ENCODE measurements at regions of chr19 and their contacts with region 1.

Region 1: DNA sequence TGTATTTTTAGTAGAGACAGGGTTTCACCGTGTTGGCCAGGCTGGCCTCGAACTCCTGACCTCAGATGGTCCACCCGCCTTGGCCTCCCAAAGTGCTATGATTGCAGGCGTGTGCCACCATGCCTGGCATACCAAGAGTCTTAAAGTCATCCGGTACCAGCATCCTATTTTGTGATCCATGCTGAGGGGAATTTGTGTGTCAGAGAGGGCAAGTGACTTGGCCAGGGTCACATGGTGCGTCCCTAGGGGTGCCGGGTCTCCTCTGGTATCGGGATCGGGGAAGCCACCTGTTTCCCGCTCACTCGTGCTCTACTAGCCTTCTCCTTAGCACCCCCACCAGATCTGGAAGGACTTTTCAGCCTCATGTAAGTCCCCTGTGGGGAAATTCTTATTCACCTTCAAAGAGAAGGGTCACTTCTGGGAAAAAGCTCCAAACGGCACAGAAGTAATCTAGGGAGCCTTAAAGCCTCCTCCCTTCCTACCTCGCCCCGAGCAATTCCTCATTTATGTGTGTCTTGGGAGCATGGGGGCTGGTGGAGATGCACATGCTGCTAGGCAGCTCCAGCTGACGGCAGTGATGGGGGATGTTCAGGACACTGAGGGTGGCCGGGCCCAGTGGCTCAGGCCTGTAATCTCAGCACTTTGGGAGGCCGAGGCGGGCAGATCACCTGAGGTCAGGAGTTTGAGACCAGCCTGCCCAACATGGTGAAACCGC is 6.1 kb upstream of the ANKLE1 start:
- DNase-seq: no peak
- ATAC-seq: no peak
- H3K4me3 ChIP-seq: no peak overlapping the region
- H3K27ac ChIP-seq: no peak overlapping the region
- H3K4me1 ChIP-seq: no peaks in the 10 kb centered on the region
- H3K27me3 ChIP-seq: no peaks in the 10 kb centered on the region
- CTCF ChIP-seq: no peak
- POLR2A ChIP-seq: no peak

Region 2: GRCh38 chr19:16801596-16801995 is 474.0 kb before region 1 on chr19:
- in situ Hi-C with region 1: no loop called
- intact Hi-C with region 1: loop called (anchors 10 kb)
- DNase-seq: no peak
- ATAC-seq: no peak
- H3K4me3 ChIP-seq: no peak overlapping the region
- H3K27ac ChIP-seq: no peak overlapping the region
- H3K4me1 ChIP-seq: no peaks in the 10 kb centered on the region
- H3K27me3 ChIP-seq: no peaks in the 10 kb centered on the region
- CTCF ChIP-seq: no peak
- POLR2A ChIP-seq: no peak

Region 3: GRCh38 chr19:17235618-17236377 is 39.8 kb before region 1 on chr19:
- in situ Hi-C with region 1: no loop called
- intact Hi-C with region 1: no loop called
- DNase-seq: peak in 1 of 2 donors; percentile 62
- ATAC-seq: peak; percentile 84 to 86
- H3K4me3 ChIP-seq: peak overlapping the region; percentile 45 to 65 (median 50)
- H3K27ac ChIP-seq: peak overlapping the region; percentile 50 to 78 (median 70)
- H3K4me1 ChIP-seq: peaks cover 9 to 18% of the 10 kb centered on the region in 2 donors
- H3K27me3 ChIP-seq: no peaks in the 10 kb centered on the region
- CTCF ChIP-seq: peak in 4 of 5 experiments; percentile 27 to 67 (median 52)
- POLR2A ChIP-seq: no peak

Region 4: GRCh38 chr19:17246681-17247425 is 28.8 kb before region 1 on chr19:
- in situ Hi-C with region 1: no loop called
- intact Hi-C with region 1: no loop called
- DNase-seq: no peak
- ATAC-seq: peak in 1 of 2 donors; percentile 1
- H3K4me3 ChIP-seq: peak overlapping the region; percentile 54 to 78 (median 69)
- H3K27ac ChIP-seq: peak overlapping the region; percentile 75 to 93 (median 87)
- H3K4me1 ChIP-seq: peaks cover 21 to 26% of the 10 kb centered on the region in 2 donors
- H3K27me3 ChIP-seq: no peaks in the 10 kb centered on the region
- CTCF ChIP-seq: no peak
- POLR2A ChIP-seq: no peak

Region 5: DNA sequence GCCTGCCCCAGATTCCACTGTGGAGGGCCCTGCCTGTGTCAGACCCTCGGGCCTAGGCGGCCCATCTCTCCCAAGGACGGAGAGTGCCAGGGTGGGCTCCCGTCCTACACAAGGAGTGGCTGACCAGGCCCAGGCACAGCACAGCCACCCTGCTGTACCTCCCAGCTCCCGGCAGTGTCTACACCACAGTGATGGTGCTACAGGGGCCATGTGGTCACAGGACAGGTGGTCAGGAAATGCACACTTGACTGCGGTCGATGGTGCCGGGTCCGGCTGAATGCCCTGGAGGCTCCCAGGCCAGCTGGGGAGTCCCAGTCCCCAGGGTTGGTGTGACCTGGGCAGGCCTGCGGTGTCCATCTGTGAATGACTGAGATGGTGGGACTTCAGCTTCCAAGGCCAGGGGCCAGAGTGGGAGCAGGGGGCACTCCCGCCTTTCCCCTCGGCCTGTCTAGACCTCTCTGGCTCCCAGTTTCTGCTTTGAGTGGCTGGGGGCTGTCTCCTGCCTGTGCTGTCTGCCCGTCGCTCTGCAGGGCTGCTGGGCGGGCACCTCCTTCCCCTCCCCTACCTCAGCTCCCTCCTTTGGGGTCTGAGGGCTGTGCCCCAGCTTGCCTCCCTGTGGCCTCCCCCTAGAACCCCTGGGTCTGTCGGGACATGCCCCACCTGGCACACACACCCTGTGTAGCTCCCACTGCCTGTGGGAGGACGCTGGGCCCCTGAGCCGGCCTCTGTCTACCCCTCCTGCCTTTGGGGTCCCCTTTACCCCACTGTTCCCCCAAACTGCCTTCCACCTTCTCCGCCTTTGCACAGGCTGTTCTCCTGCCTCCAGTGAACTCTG is 46.3 kb after region 1 on chr19:
- in situ Hi-C with region 1: no loop called
- intact Hi-C with region 1: no loop called
- DNase-seq: no peak
- ATAC-seq: no peak
- H3K4me3 ChIP-seq: no peak overlapping the region
- H3K27ac ChIP-seq: no peak overlapping the region
- H3K4me1 ChIP-seq: no peaks in the 10 kb centered on the region
- H3K27me3 ChIP-seq: no peaks in the 10 kb centered on the region
- CTCF ChIP-seq: no peak
- POLR2A ChIP-seq: no peak